GM12878 (cell line): ENCODE measurements at regions of chr9 and their contacts with region 1.

Region 1: GRCh38 chr9:128081056-128081455 is 13.0 kb downstream of the SLC25A25 start:
- DNase-seq: no peak
- ATAC-seq: peak; percentile 37; the same call in 1 of the 3 replicates
- H3K4me3 ChIP-seq: no peak overlapping the region
- H3K27ac ChIP-seq: peak overlapping the region; percentile 16
- H3K4me1 ChIP-seq: peaks cover 30% of the 10 kb centered on the region
- H3K27me3 ChIP-seq: no peaks in the 10 kb centered on the region
- CTCF ChIP-seq: no peak
- EP300 ChIP-seq: no peak
- POLR2A ChIP-seq: no peak
- RAD21 ChIP-seq: no peak

Region 2: DNA sequence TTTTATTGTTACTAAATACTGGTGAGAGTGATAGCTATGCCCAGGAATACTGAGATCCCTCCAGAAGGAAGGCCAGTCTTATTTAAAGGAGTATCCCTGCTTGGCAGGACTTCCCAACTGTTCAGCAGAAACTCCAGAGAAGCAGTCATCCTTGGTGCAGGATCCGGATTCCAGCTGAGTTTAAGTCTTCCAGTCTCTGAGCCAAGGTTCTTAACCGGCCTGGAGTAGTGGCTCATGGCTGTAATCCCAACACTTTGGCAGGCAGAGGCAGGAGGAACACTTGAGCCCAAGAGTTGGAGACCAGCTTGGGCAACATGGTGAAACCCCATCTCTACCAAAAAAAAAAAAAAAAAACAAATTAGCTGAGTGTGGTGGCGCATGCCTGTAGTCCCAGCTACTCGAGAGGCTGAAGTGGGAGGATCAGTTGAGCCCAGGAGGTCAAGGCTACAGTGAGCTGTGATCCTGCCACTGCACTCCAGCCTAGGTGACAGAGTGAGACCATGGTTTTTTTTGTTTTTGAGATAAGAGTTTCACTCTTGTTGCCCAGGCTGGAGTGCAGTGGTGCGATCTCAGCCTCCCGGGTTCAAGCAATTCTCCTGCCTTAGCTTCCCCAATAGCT is 21.6 kb before region 1 on chr9:
- CTCF ChIA-PET with region 1: no interaction called
- POLR2A ChIA-PET with region 1: interaction called, 10 read pairs
- RAD21 ChIA-PET with region 1: no interaction called
- SMC1A ChIA-PET with region 1: interaction called, 3 read pairs
- in situ Hi-C with region 1: no loop called
- intact Hi-C with region 1: no loop called
- DNase-seq: no peak
- ATAC-seq: no peak
- H3K4me3 ChIP-seq: no peak overlapping the region
- H3K27ac ChIP-seq: no peak overlapping the region
- H3K4me1 ChIP-seq: peaks cover 11% of the 10 kb centered on the region
- H3K27me3 ChIP-seq: no peaks in the 10 kb centered on the region
- CTCF ChIP-seq: no peak
- EP300 ChIP-seq: no peak
- POLR2A ChIP-seq: no peak
- RAD21 ChIP-seq: no peak

Region 3: DNA sequence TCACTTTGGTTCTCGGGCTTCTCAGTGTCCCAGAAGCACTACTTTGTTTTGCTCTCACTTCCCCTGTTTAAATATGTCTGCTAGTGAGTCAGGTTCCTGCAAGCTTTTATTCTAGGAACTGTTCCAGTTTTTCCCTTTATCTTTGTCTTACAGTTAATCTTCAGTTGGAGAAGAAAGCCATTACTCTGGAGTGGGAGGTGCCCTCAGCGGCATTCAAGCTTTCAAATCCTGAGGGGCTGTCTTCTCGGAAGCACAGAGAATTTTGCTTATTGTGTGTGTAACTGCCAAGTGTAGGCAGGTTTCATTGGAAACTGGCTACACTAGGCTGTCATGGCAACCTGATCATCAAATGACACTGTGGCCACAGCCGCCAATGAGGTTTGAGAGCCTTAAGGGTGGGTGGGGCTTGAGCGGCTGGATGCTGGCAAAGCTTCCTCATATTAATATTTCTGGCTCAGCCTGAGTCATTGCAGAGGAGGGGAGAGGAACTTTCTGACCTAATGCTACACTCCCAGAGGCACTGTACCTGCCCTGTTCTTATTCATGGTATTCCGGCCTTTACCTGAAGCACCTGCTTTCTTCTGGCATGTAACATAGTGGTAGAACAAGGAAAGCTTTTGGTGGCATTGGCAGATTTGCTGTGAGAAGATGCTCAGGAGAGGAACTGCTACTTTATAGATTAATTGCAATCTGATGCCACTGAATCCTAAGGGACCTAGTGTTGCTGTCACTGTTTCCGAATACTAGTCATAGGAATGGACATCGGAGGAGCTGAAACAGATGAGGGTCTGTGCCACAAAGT is 13.3 kb after region 1 on chr9:
- CTCF ChIA-PET with region 1: interaction called, 17 read pairs
- POLR2A ChIA-PET with region 1: interaction called, 7 read pairs
- RAD21 ChIA-PET with region 1: interaction called, 3 read pairs
- SMC1A ChIA-PET with region 1: interaction called, 6 read pairs
- in situ Hi-C with region 1: no loop called
- intact Hi-C with region 1: no loop called
- DNase-seq: no peak
- ATAC-seq: peak; percentile 99
- H3K4me3 ChIP-seq: no peak overlapping the region
- H3K27ac ChIP-seq: peak overlapping the region; percentile 51
- H3K4me1 ChIP-seq: peaks cover 25% of the 10 kb centered on the region
- H3K27me3 ChIP-seq: no peaks in the 10 kb centered on the region
- CTCF ChIP-seq: no peak
- EP300 ChIP-seq: no peak
- POLR2A ChIP-seq: no peak
- RAD21 ChIP-seq: no peak